ENCODE measurements at regions of chr2 and their contacts with region 1.

Region 1: GRCh38 chr2:64945973-64946768 is 43.0 kb upstream of the SLC1A4 start:
- DNase-seq: peak; percentile 19 to 74 (median 47)
- ATAC-seq: peak; percentile 93
- H3K4me3 ChIP-seq: peak overlapping the region; percentile 19
- H3K4me3 Mint-ChIP-seq: peak overlapping the region; percentile 65 to 84 (median 80)
- H3K27ac ChIP-seq: peak overlapping the region; percentile 50
- H3K27ac Mint-ChIP-seq: peak overlapping the region; percentile 49 to 94 (median 89)
- H3K4me1 ChIP-seq: peaks cover 21 to 25% of the 10 kb centered on the region in 2 donors
- H3K4me1 Mint-ChIP-seq: peaks cover 29 to 60% (median 42%) of the 10 kb centered on the region in 7 donors
- H3K27me3 ChIP-seq: no peaks in the 10 kb centered on the region
- H3K27me3 Mint-ChIP-seq: no peaks in the 10 kb centered on the region

Region 2: DNA sequence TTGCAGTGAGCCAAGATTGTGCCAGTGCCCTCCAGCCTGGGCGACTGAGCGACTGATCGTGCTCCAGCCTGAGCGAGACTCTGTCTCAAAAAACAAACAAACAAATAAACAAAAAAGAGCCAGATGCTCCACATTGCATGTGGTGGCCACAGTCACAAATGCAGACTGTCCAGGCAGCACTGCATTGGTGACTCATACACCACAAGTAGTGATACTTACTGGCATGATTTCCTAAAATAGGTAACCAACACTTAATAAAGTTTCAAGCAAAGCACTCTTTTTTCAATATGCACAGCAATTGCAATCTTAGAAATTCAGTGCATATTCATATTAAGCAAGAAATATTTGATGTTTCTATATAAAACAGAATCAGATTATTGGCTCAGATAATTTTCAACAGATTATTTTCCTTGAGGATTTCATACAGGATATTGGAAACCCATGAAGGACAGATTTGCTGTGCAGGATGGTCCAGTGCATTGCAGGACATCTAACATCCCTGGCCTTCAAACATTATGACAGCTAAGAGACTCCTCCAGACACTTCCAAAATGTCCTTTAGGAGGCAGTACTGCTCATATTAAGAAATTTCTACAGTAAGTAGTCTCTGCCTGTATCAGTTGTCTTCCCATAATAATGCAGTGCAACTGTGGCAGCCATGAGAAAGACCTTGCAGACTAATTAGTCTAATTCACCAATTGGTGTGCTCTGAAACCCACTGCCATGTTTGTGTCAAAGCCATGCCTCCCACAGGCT is 32.5 kb after region 1 on chr2:
- CTCF ChIA-PET with region 1: no interaction called
- POLR2A ChIA-PET with region 1: no interaction called
- intact Hi-C with region 1: loop called in 1 of 2 experiments (anchors 1 kb)
- DNase-seq: peak in 3 of 9 donors; percentile 7 to 13 (median 9)
- ATAC-seq: peak; percentile 37
- H3K4me3 ChIP-seq: no peak overlapping the region
- H3K4me3 Mint-ChIP-seq: no peak overlapping the region
- H3K27ac ChIP-seq: no peak overlapping the region
- H3K27ac Mint-ChIP-seq: peak overlapping the region in 1 of 9 donors; percentile 4
- H3K4me1 ChIP-seq: no peaks in the 10 kb centered on the region
- H3K4me1 Mint-ChIP-seq: peaks cover 0 to 39% (median 0%) of the 10 kb centered on the region in 7 donors
- H3K27me3 ChIP-seq: no peaks in the 10 kb centered on the region
- H3K27me3 Mint-ChIP-seq: peaks cover 0 to 12% (median 0%) of the 10 kb centered on the region in 5 donors

Measured in naive thymus-derived CD4-positive, alpha-beta T cell (primary cell).